ENCODE measurements at regions of chr12 and their contacts with region 1.

Region 1: GRCh38 chr12:68610370-68611093 is at the start of gene RAP1B:
- DNase-seq: peak; percentile 37 to 91
- H3K4me3 ChIP-seq: peak within 1 kb of the TSS; percentile 84 to 98
- H3K27ac ChIP-seq: peak within 1 kb of the TSS; percentile 99 to 100
- H3K4me1 ChIP-seq: peaks cover 12 to 22% of the 10 kb centered on the region in 2 donors
- H3K27me3 ChIP-seq: no peaks in the 10 kb centered on the region
- CTCF ChIP-seq: no peak
- total RNA-seq, gene RAP1B: 140 TPM

Region 2: GRCh38 chr12:68279227-68280054 is 331.1 kb before region 1 on chr12:
- intact Hi-C with region 1: no loop called
- DNase-seq: no peak
- H3K4me3 ChIP-seq: no peak overlapping the region
- H3K27ac ChIP-seq: no peak overlapping the region
- H3K4me1 ChIP-seq: no peaks in the 10 kb centered on the region
- H3K27me3 ChIP-seq: no peaks in the 10 kb centered on the region
- CTCF ChIP-seq: no peak

Region 3: GRCh38 chr12:68331869-68332727 is 278.4 kb before region 1 on chr12 and contains the start of gene MDM1:
- intact Hi-C with region 1: loop called (anchors 2 kb)
- DNase-seq: peak; percentile 94 to 99
- H3K4me3 ChIP-seq: peak within 1 kb of the TSS; percentile 77 to 88
- H3K27ac ChIP-seq: peak within 1 kb of the TSS; percentile 58 to 66
- H3K4me1 ChIP-seq: peaks cover 0 to 8% of the 10 kb centered on the region in 2 donors
- H3K27me3 ChIP-seq: no peaks in the 10 kb centered on the region
- CTCF ChIP-seq: no peak
- total RNA-seq, gene MDM1: 9.5 TPM

Region 4: GRCh38 chr12:68406134-68406594 is 204.4 kb before region 1 on chr12:
- intact Hi-C with region 1: loop called (anchors 5 kb)
- DNase-seq: peak; percentile 58 to 94
- H3K4me3 ChIP-seq: peak overlapping the region; percentile 4 to 22
- H3K27ac ChIP-seq: peak overlapping the region in 1 of 2 donors; percentile 66
- H3K4me1 ChIP-seq: peaks cover 0 to 15% of the 10 kb centered on the region in 2 donors
- H3K27me3 ChIP-seq: no peaks in the 10 kb centered on the region
- CTCF ChIP-seq: peak; percentile 13 to 38 (median 36)

Region 5: DNA sequence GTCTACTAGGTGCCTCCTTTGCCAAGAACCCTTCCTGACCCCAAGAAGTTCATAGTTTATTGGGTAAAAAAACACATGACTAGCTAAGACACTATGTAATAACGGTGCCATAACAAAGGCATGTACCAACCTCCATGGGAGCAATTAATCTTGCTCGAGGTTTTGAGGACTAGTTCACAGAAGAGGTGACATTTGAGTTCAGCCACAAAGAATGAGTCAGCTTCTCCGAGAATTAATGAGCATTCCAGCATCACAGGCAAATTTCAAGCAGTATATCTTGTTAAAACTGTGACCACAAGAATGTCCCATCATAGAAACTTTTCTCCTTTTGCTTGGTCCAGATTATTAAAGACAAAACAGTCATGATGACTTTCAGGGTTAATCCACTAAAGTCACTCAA is 112.8 kb before region 1 on chr12:
- intact Hi-C with region 1: loop called (anchors 2 kb)
- DNase-seq: peak in 1 of 2 donors; percentile 66
- H3K4me3 ChIP-seq: no peak overlapping the region
- H3K27ac ChIP-seq: peak overlapping the region; percentile 43 to 65
- H3K4me1 ChIP-seq: peaks cover 0 to 13% of the 10 kb centered on the region in 2 donors
- H3K27me3 ChIP-seq: no peaks in the 10 kb centered on the region
- CTCF ChIP-seq: no peak

Region 6: GRCh38 chr12:68686595-68687521 is 76.3 kb after region 1 on chr12 and contains the start of gene NUP107:
- intact Hi-C with region 1: loop called (anchors 1 kb)
- DNase-seq: peak; percentile 93 to 99
- H3K4me3 ChIP-seq: peak within 1 kb of the TSS; percentile 69 to 85
- H3K27ac ChIP-seq: peak within 1 kb of the TSS; percentile 66 to 69
- H3K4me1 ChIP-seq: peaks cover 5 to 7% of the 10 kb centered on the region in 2 donors
- H3K27me3 ChIP-seq: no peaks in the 10 kb centered on the region
- CTCF ChIP-seq: no peak
- total RNA-seq, gene NUP107: 4.7 TPM